Caco-2 (cell line): ENCODE measurements at regions of chr17 and their contacts with region 1.

Region 1: DNA sequence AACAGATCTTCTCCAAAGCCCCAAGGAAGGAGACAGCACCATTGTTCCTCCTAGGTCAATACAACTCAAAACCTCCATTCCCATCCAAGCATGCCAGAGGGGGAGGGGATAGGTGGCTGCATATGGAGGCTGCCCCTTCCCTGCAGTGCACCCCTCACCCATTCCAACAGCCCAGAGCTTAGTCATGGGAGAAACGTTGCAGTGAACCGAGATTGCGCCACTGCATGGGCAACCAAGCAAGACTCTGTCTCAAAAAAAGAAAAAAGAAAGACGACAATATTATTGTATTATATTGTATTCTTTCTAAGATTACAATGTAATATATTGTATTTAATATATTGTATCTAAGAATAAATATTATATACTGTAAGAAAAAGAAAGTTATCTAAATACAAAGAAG is 36.4 kb upstream of the CD300E start:
- DNase-seq: no peak
- H3K4me3 ChIP-seq: no peak overlapping the region
- H3K4me3 Mint-ChIP-seq: no peak overlapping the region
- H3K27ac Mint-ChIP-seq: no peak overlapping the region
- H3K4me1 ChIP-seq: peaks cover 7% of the 10 kb centered on the region; the same call in 1 of the 2 replicates
- H3K4me1 Mint-ChIP-seq: no peaks in the 10 kb centered on the region
- H3K27me3 ChIP-seq: no peaks in the 10 kb centered on the region; the same call in 1 of the 2 replicates
- H3K27me3 Mint-ChIP-seq: no peaks in the 10 kb centered on the region
- CTCF ChIP-seq: no peak

Region 2: DNA sequence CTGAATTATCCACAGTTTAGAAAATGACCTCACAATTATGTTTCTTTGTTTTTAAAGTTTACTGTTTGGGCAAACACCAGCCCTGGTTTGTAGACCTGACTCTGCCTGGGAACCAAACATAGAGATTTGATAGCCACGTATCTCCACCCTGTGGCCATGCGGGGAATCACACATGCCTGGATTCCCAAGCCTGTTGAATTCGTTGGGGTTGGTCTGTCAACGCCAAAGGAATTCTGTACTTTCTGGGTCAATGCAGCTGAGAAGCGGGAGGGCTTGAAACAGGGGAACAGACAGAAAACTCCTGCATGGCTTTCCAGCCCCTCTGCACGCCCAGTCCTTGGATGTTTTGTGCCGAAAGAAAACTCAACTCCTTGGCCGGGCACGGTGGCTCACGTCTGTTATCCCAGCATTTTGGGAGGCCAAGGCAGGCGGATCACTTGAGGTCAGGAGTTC is 166.5 kb before region 1 on chr17:
- CTCF ChIA-PET with region 1: no interaction called
- POLR2A ChIA-PET with region 1: no interaction called
- intact Hi-C with region 1: no loop called
- DNase-seq: peak; percentile 72 to 84
- H3K4me3 ChIP-seq: no peak overlapping the region
- H3K4me3 Mint-ChIP-seq: no peak overlapping the region
- H3K27ac Mint-ChIP-seq: no peak overlapping the region
- H3K4me1 ChIP-seq: no peaks in the 10 kb centered on the region
- H3K4me1 Mint-ChIP-seq: no peaks in the 10 kb centered on the region
- H3K27me3 ChIP-seq: no peaks in the 10 kb centered on the region
- H3K27me3 Mint-ChIP-seq: peaks cover 10% of the 10 kb centered on the region
- CTCF ChIP-seq: peak; percentile 89 to 93

Region 3: GRCh38 chr17:74646231-74646630 is 13.7 kb before region 1 on chr17:
- CTCF ChIA-PET with region 1: interaction called, 12 read pairs
- POLR2A ChIA-PET with region 1: no interaction called
- intact Hi-C with region 1: no loop called
- DNase-seq: no peak
- H3K4me3 ChIP-seq: no peak overlapping the region
- H3K4me3 Mint-ChIP-seq: no peak overlapping the region
- H3K27ac Mint-ChIP-seq: no peak overlapping the region
- H3K4me1 ChIP-seq: no peaks in the 10 kb centered on the region
- H3K4me1 Mint-ChIP-seq: no peaks in the 10 kb centered on the region
- H3K27me3 ChIP-seq: peaks cover 2% of the 10 kb centered on the region; the same call in 1 of the 2 replicates
- H3K27me3 Mint-ChIP-seq: peaks cover 24% of the 10 kb centered on the region
- CTCF ChIP-seq: peak in 1 of 2 experiments; percentile 29

Region 4: GRCh38 chr17:74690409-74690825 is 30.5 kb after region 1 on chr17:
- CTCF ChIA-PET with region 1: interaction called, 7 read pairs
- POLR2A ChIA-PET with region 1: no interaction called
- intact Hi-C with region 1: loop called (anchors 5 kb)
- DNase-seq: no peak
- H3K4me3 ChIP-seq: no peak overlapping the region
- H3K4me3 Mint-ChIP-seq: no peak overlapping the region
- H3K27ac Mint-ChIP-seq: no peak overlapping the region
- H3K4me1 ChIP-seq: no peaks in the 10 kb centered on the region
- H3K4me1 Mint-ChIP-seq: no peaks in the 10 kb centered on the region
- H3K27me3 ChIP-seq: peaks cover 2% of the 10 kb centered on the region
- H3K27me3 Mint-ChIP-seq: no peaks in the 10 kb centered on the region
- CTCF ChIP-seq: no peak

Region 5: GRCh38 chr17:74770498-74771318 is 110.8 kb after region 1 on chr17:
- CTCF ChIA-PET with region 1: interaction called, 24 read pairs
- POLR2A ChIA-PET with region 1: no interaction called
- intact Hi-C with region 1: loop called (anchors 1 kb)
- DNase-seq: peak; percentile 84 to 89
- H3K4me3 ChIP-seq: no peak overlapping the region
- H3K4me3 Mint-ChIP-seq: peak overlapping the region; percentile 24
- H3K27ac Mint-ChIP-seq: peak overlapping the region; percentile 83
- H3K4me1 ChIP-seq: peaks cover 51% of the 10 kb centered on the region
- H3K4me1 Mint-ChIP-seq: peaks cover 51% of the 10 kb centered on the region
- H3K27me3 ChIP-seq: no peaks in the 10 kb centered on the region
- H3K27me3 Mint-ChIP-seq: no peaks in the 10 kb centered on the region
- CTCF ChIP-seq: peak; percentile 86 to 97

Region 6: GRCh38 chr17:74852237-74853047 is 192.5 kb after region 1 on chr17:
- CTCF ChIA-PET with region 1: interaction called, 7 read pairs
- POLR2A ChIA-PET with region 1: no interaction called
- intact Hi-C with region 1: loop called (anchors 10 kb)
- DNase-seq: peak; percentile 93 to 94
- H3K4me3 ChIP-seq: peak overlapping the region; percentile 62
- H3K4me3 Mint-ChIP-seq: peak overlapping the region; percentile 82
- H3K27ac Mint-ChIP-seq: peak overlapping the region; percentile 63
- H3K4me1 ChIP-seq: peaks cover 8% of the 10 kb centered on the region
- H3K4me1 Mint-ChIP-seq: peaks cover 7% of the 10 kb centered on the region
- H3K27me3 ChIP-seq: 0 out of 2 replicates have a peak, but pooled peaks cover 2% of the 10 kb centered on the region
- H3K27me3 Mint-ChIP-seq: peaks cover 16% of the 10 kb centered on the region
- CTCF ChIP-seq: no peak